Colonic mucosa (tissue), 4 donors: ENCODE measurements at regions of chr17 and their contacts with region 1.

Region 1: DNA sequence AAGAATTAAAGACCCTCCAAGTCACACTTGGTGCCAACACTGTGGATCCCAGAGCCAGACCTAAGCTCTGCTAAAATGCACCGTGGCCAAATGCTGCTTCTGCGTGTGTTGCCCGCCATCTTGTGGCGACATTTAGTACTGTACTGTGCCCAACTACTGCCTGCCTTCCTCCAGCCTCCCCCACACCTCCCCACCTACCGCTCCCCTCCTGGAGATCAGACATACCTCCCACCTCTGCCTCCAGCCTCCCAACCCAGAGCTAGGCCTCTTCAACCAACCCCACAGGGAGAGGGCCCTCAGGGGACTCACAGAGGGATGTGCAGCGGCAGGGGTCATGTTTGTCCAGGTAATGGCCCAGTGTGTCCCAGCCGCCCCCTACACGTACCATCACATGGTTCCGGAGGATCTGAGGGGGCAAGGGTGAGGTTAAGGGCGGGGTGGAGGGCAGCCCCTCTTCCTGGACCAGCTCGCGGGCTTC is 5.5 kb downstream of the GAS2L2 start:
- DNase-seq: peak; percentile 76
- H3K4me3 ChIP-seq: no peak overlapping the region
- H3K27ac ChIP-seq: no peak overlapping the region
- H3K4me1 ChIP-seq: no peaks in the 10 kb centered on the region
- H3K27me3 ChIP-seq: peaks cover 31% of the 10 kb centered on the region
- CTCF ChIP-seq: peak; percentile 87

Region 2: GRCh38 chr17:35312790-35313711 is 434.5 kb before region 1 on chr17:
- intact Hi-C with region 1: loop called (anchors 2 kb)
- DNase-seq: peak; percentile 45
- H3K4me3 ChIP-seq: peak overlapping the region; percentile 21
- H3K27ac ChIP-seq: no peak overlapping the region
- H3K4me1 ChIP-seq: no peaks in the 10 kb centered on the region
- H3K27me3 ChIP-seq: no peaks in the 10 kb centered on the region
- CTCF ChIP-seq: peak; percentile 58

Region 3: DNA sequence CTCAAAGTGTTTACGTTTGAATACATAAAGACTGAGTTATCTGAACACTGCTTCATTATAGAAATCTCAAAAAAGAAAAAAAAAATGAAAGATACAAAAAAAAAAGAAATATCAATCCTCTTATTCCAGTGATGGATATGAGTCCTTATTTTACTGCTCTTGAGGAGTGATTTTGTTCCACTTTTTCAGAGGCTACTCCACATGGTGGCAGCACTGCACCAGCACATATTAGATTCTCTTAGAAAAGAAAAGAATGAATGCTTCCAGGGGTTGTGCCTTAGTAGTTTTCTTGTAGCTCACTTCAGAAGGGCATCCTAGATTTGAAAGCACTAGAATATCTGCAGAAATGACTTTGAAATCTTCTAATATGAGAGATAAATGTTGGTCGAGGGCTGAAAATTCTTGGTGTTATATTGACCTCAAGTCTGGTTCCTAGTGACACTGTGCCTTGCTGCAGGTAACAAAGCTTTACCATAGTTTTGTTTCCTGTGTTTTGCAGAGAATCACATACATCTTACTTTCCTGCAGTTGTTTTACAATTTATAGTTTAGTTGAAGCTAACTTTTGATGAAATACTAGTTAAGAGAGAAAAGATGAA is 134.6 kb before region 1 on chr17:
- intact Hi-C with region 1: loop called (anchors 5 kb)
- DNase-seq: peak; percentile 28
- H3K4me3 ChIP-seq: no peak overlapping the region
- H3K27ac ChIP-seq: no peak overlapping the region
- H3K4me1 ChIP-seq: no peaks in the 10 kb centered on the region
- H3K27me3 ChIP-seq: no peaks in the 10 kb centered on the region
- CTCF ChIP-seq: peak; percentile 34

Region 4: GRCh38 chr17:35825206-35825605 is 77.6 kb after region 1 on chr17:
- intact Hi-C with region 1: no loop called
- DNase-seq: no peak
- H3K4me3 ChIP-seq: no peak overlapping the region
- H3K27ac ChIP-seq: no peak overlapping the region
- H3K4me1 ChIP-seq: no peaks in the 10 kb centered on the region
- H3K27me3 ChIP-seq: no peaks in the 10 kb centered on the region
- CTCF ChIP-seq: no peak